AG04450 (cell line): ENCODE measurements at regions of chr18 and their contacts with region 1.

Region 1: GRCh38 chr18:57855551-57855950 is 52.4 kb upstream of the ATP8B1 start:
- DNase-seq: no peak
- H3K4me3 ChIP-seq: no peak overlapping the region
- H3K27ac ChIP-seq: no peak overlapping the region
- H3K27me3 ChIP-seq: no peaks in the 10 kb centered on the region
- CTCF ChIP-seq: no peak

Region 2: DNA sequence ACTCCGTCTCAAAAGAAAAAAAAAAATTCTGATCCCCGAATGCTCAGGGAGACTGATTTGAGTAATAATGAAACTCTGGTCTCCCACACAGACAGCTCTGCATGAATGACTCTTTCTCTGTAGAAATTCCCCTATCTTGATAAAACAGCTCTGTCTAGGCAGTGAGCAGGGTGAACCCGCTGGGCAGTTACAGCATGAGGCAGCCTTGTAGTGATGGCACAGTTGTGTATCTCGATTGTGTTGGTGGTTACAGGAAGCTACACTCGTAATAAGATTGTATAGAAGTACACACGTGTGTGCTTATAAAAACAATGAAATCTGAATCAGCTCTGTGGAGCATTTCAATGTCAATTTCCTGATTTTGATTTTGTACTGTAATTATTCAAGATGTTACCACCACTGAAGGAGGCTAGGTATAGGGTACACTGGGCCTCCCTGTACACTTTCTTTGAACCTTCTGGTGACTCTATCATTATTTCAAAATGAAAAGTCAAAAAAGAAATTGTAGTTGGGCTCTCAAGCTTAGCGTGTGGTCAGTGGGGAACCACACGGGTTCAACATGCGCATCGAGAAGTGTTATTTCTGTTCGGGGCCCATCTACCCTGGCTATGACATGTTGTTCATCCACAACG is 17.5 kb before region 1 on chr18:
- CTCF ChIA-PET with region 1: interaction called, 3 read pairs
- POLR2A ChIA-PET with region 1: interaction called, 11 read pairs
- DNase-seq: no peak
- H3K4me3 ChIP-seq: no peak overlapping the region
- H3K27ac ChIP-seq: no peak overlapping the region
- H3K27me3 ChIP-seq: no peaks in the 10 kb centered on the region
- CTCF ChIP-seq: no peak

Region 3: GRCh38 chr18:57931038-57931437 is 75.5 kb after region 1 on chr18:
- CTCF ChIA-PET with region 1: no interaction called
- POLR2A ChIA-PET with region 1: no interaction called
- DNase-seq: no peak
- H3K4me3 ChIP-seq: no peak overlapping the region
- H3K27ac ChIP-seq: no peak overlapping the region
- H3K27me3 ChIP-seq: peaks cover 2% of the 10 kb centered on the region
- CTCF ChIP-seq: no peak